Upper lobe of right lung (tissue), 1 donor: ENCODE measurements at regions of chr4 and their contacts with region 1.

Region 1: DNA sequence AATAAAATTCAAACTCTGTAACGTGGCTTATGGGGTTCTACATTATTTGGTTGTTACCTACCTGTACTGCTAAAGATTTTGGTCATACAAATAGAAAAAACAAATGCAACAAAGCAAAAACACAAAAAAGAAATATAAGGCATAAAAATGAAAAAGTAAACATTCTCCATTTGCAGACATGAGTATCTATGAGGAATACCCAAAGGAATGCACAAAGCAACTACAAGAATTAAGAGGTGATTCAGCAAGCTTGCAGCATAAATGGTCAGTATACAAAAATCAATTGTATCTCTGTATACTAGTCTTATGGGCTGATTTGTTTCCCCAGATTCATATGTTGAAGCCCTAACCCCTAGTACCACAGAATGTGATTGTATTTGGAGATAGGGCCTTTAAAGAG is 3.6 kb upstream of the PDE5A start:
- DNase-seq: no peak
- ATAC-seq: no peak
- H3K4me3 ChIP-seq: no peak overlapping the region
- H3K27ac ChIP-seq: no peak overlapping the region
- H3K4me1 ChIP-seq: peaks cover 4% of the 10 kb centered on the region
- H3K27me3 ChIP-seq: peaks cover 4% of the 10 kb centered on the region
- CTCF ChIP-seq: no peak

Region 2: GRCh38 chr4:120049732-120050494 is 417.7 kb after region 1 on chr4:
- intact Hi-C with region 1: loop called (anchors 5 kb)
- DNase-seq: no peak
- ATAC-seq: peak; percentile 99
- H3K4me3 ChIP-seq: no peak overlapping the region
- H3K27ac ChIP-seq: no peak overlapping the region
- H3K4me1 ChIP-seq: no peaks in the 10 kb centered on the region
- H3K27me3 ChIP-seq: no peaks in the 10 kb centered on the region
- CTCF ChIP-seq: peak; percentile 86